ENCODE measurements at regions of chr12 and their contacts with region 1.

Region 1: DNA sequence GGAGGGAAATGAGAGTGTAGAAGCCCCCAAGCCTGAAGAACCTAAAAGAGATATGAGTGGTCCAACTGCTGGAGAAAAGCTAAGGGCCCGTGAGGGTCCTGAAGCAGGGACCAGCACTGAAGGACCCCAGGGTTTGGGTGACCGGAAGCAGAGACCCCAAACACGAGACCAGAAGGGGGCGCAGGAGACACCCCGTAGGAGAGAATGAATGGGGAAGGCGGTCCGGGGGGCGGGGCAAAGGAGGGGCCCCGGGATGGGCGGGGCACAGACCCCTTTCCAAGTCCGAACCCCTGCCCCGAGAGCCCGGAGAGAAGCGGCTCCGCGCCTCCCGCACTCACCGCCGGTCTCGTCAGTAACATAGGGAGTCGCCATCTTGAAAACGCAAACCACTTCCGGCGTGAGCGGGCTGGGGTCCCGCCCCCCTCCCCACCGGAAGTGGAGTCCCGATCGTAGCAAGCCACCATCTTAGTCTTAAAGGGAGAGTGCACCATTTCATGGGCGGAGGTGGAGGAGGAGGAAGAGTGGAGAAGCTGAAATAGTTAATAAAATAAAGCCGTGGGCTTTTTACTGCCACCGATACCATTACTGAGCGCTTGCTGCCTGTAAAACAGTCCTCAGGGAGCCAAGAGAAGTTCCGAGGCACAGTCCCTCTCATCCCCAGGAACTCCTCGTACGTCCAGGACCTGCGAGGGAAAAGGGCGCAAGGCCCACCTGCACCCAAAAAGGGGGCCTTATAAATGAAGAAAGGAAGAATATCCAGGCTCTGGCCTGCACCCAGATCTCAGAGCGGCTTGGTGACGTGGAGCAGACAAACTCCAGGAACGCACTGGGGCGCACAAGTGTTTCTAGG is 731 bp downstream of the PYM1 start:
- DNase-seq: peak; percentile 94

Region 2: GRCh38 chr12:55817346-55818139 is 109.4 kb before region 1 on chr12 and contains the starts of genes ORMDL2 and SARNP:
- intact Hi-C with region 1: loop called (anchors 5 kb)
- DNase-seq: peak; percentile 97
- total RNA-seq, gene ORMDL2: 23.0 TPM
- total RNA-seq, gene SARNP: 56.2 TPM

Region 3: GRCh38 chr12:55829967-55830600 is 96.9 kb before region 1 on chr12:
- intact Hi-C with region 1: loop called (anchors 2 kb)
- DNase-seq: no peak

Region 4: GRCh38 chr12:55973598-55974307 is 46.8 kb after region 1 on chr12 and contains the start of gene RAB5B:
- intact Hi-C with region 1: loop called (anchors 5 kb)
- DNase-seq: peak; percentile 99
- total RNA-seq, gene RAB5B: 108 TPM

Region 5: DNA sequence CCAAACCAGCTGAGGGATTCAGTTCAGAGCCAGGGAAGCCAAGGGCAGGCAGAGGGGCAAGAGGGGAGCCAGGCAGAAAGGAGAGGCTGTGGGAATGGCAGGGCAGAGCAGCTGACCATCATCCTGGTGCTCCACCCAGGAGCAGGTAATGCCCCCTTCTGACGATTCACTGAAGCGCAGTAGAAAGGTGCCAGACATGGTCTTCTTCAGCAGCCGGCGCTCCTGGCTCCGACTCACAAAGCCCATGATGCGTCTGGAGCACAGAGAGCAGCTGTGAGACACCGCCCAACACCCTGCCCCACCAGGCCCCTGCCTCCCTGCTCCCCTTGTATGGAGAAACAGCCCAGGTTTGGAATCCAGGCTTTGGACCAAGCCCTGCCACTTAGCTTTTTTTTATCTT is 419.7 kb after region 1 on chr12:
- intact Hi-C with region 1: no loop called
- DNase-seq: no peak

Region 6: DNA sequence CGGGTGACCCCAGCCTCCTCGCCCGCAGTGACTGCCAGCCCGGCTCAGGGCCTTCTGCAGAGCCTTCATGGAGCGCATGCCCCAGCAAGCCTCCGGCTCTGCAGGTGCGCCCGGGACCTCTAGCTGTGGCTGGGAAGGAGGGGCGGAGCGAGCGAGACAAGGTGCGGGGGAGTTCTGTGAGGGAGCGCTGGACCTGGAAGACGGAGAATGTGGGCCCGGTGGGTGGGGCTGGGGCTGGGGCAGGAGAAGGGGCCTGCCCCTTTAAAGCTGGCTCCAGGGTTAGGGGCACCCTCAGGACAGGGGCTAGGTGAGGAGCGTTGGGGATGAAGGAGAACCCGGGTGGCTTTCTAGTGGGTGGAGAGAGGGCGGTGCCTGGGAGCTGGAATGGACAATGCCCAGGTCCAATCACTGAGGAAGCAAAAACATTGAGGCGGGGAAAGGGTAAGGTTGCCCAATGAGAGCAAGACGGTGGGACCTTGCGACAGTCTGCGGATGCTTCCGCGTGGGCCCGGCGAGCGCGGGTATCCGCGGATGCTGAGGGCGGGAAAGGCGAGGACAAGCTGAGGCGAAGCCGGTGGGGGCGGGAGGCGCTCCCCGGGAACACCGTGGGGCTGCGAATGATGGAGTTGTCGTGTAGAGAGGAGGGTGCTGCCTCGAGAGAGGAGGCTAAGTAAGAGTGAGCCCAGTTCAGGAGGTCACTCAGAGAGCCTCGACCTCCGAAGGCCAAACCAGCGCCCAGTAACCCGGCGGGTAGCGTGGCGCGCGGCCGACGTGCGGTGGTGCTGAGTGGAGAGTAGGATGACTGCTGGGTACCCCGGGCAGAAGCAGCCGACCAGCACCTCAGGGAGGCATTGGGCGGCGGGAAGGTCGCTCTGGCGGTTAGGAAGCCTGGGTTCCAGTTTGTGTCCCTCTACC is 561.3 kb after region 1 on chr12 and contains the start of gene GLS2:
- intact Hi-C with region 1: no loop called
- DNase-seq: peak; percentile 86
- total RNA-seq, gene GLS2: 0.38 TPM

Measured in cardiac septum (tissue), 1 donor.